Mucosa of descending colon (tissue), 3 donors: ENCODE measurements at regions of chr16 and their contacts with region 1.

Region 1: GRCh38 chr16:16191493-16192167 is 31.7 kb downstream of the ABCC6 start:
- DNase-seq: no peak
- ATAC-seq: no peak
- H3K4me3 ChIP-seq: no peak overlapping the region
- H3K4me1 ChIP-seq: no peaks in the 10 kb centered on the region
- CTCF ChIP-seq: no peak

Region 2: DNA sequence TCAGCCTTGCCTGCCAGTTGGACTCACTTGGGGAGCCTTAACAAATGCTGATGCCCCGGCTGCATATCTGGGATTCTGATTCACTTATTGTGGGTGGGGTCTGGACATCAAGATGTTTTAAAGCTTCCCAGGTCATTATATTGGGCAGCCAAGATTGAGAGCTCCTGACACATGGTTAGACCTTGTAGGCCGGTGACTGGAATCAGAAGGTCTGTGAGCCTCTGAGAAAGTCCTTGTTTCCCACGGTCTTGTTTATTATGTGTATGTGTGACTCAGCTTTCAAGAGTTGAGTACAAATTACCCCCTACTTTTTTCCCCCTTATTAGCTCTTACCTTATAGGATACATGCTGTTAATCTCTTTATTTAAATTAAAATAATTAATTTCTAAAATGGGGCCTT is 138.7 kb before region 1 on chr16:
- intact Hi-C with region 1: no loop called
- DNase-seq: no peak
- ATAC-seq: no peak
- H3K4me3 ChIP-seq: no peak overlapping the region
- H3K4me1 ChIP-seq: no peaks in the 10 kb centered on the region
- CTCF ChIP-seq: no peak

Region 3: DNA sequence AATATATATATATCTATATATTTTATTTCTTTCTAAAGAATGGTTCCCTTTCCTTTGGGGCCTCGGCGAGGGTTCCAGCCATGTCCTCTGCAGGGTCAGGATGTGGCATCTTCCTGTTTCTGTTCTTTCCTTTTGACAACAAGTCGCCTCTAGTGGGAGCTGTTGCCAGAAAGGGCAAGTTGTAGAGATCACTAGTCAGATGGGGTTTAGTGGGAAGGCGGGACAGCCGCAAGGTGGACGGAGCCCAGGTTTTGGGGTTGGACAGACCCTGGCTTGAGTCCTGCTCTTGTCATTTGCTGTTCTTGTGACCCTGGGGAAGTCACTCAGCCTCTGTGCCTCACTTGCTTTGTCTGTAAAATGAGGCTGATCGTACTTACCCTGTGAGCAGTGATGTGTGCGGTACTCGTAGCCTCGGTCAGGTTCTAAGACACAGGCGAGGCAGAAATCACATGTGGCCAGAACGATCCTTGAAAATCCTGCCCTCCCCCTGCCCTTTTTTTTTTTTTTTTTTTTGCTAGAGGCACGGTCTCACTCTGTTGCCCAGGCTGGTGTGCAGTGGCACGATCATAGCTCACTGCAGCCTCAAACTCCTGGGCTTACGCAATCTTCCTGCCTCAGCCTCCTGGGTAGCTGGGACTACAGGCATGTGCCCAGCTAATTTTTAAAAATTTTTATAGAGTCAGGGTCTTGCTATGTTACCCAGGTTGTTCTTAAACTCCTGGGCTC is 48.4 kb before region 1 on chr16:
- intact Hi-C with region 1: loop called in 1 of 2 experiments (anchors 5 kb)
- DNase-seq: peak in 1 of 3 donors; percentile 32
- ATAC-seq: peak; percentile 32
- H3K4me3 ChIP-seq: no peak overlapping the region
- H3K4me1 ChIP-seq: no peaks in the 10 kb centered on the region
- CTCF ChIP-seq: no peak